Astrocyte of the cerebellum (primary cell): ENCODE measurements at regions of chr14 and their contacts with region 1.

Region 1: DNA sequence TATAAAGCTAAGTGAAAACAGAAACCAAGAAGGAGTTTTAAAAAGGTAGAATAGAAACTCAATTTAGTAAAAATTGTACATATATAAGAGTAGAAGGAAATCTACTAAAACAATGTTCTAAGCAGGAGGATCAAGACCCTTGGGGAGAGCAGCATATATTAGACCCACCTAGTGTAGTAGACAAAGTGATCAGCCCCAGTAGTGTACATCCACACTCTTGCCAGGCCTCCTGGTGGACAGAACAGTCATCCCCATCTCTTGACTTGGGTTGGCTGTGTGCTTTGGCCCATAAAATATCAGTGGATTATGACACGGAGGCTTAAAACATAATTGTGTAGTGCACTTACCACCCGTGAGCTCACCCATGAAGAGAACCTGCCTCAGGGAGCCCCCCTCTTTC is 10.9 kb upstream of the OTUB2 start:
- DNase-seq: no peak
- H3K4me3 ChIP-seq: no peak overlapping the region
- CTCF ChIP-seq: peak; percentile 13

Region 2: DNA sequence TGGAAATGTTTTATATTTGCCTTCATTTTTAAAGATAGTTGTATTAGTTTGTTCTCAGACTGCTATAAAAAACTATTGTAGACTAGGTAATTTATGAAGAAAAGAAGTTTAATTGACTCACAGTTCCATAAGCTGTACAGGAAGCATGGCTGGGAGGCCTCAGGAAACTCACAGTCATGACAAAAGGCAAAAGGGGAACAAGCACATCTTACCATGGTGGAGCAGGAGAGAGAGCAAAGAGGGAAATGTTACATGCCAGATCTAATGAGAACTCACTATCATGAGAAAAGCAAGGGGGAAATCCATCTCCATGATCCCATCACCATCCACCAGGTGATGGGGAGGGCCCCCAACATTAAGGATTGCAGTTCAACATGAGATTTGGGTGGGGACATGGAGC is 620.0 kb before region 1 on chr14:
- in situ Hi-C with region 1: no loop called
- DNase-seq: no peak
- H3K4me3 ChIP-seq: no peak overlapping the region
- CTCF ChIP-seq: no peak

Region 3: GRCh38 chr14:93906341-93907329 is 108.6 kb before region 1 on chr14:
- in situ Hi-C with region 1: no loop called
- DNase-seq: no peak
- H3K4me3 ChIP-seq: no peak overlapping the region
- CTCF ChIP-seq: peak; percentile 74

Region 4: DNA sequence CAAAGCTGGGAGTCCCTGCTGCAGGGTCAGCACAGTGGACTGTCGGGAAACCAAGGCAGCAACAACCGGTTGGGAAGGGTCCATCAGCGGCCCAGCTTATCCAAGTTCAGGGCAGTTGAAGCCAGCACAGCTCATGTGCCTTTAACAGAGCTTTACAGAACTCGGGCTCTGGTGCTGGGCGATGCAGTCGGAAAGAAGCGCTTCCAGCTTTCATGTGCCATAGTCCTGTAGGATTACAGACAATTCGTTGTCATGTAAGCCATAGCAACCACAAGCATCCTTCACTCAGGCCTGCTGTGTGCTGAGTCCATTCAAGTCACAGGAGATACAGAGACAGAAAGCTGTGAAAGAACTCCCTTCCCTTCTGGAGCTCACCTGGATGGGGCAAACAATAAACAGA is 91.6 kb before region 1 on chr14:
- in situ Hi-C with region 1: loop called (anchors 5 kb)
- DNase-seq: no peak
- H3K4me3 ChIP-seq: no peak overlapping the region
- CTCF ChIP-seq: no peak

Region 5: DNA sequence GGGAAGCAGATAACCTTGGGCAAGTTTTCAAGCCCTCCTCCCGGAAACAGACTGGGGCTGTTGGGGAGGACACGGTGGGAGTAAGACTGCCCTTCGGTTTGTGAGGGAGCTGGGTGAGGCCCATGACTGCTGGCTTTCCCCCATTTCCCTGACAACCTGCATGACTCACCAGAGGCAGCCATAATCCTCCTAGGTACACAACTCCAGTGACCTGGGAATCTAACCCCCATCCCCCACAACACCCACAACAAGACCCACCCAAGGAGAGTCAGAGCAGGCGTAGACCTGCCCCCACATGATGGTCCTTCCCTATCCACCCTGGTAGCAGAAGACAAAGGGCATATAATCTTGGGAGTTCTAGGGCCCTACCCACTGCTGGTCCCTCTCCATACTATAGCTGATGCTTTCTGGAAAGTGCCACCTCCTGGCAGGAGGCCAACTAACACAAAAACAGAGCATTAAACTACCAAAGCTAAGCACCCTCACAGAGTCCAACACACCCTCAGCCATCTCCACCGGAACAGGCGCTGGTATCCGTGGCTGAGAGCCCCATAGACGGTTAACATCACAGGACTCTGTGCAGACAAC is 51.0 kb after region 1 on chr14:
- in situ Hi-C with region 1: no loop called
- DNase-seq: no peak
- H3K4me3 ChIP-seq: no peak overlapping the region
- CTCF ChIP-seq: no peak